GM10248 (cell line): ENCODE measurements at regions of chr12 and their contacts with region 1.

Region 1: GRCh38 chr12:15590180-15590826 is 198.9 kb downstream of the EPS8 start:
- DNase-seq: peak; percentile 78
- CTCF ChIP-seq: peak; percentile 80

Region 2: GRCh38 chr12:15532364-15532977 is 57.8 kb before region 1 on chr12:
- CTCF ChIA-PET with region 1: interaction called, 328 read pairs
- POLR2A ChIA-PET with region 1: no interaction called
- DNase-seq: peak; percentile 47
- CTCF ChIP-seq: peak; percentile 64

Region 3: DNA sequence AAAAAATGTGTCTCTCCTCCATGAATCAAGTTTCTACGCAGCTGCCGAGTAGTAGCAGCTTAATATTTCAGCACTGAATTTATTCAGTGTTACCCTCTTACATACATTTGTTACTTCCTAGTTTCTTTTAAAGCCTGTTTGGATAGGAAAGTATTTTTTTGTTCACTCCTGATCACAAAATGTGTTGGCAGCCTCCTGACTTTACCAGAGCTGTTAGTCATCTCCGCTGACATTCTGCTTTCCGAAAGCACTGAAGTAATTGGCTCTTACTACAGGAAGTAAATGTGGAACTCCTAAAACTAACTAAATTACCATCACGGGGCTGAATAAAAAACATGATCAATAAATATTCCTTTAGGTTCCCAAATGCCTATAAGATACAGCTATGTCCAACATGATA is 26.6 kb before region 1 on chr12:
- CTCF ChIA-PET with region 1: interaction called, 22 read pairs
- POLR2A ChIA-PET with region 1: no interaction called
- DNase-seq: no peak
- CTCF ChIP-seq: no peak

Region 4: GRCh38 chr12:15603474-15604085 is 13.3 kb after region 1 on chr12:
- CTCF ChIA-PET with region 1: interaction called, 11 read pairs
- POLR2A ChIA-PET with region 1: no interaction called
- DNase-seq: no peak
- CTCF ChIP-seq: no peak

Region 5: DNA sequence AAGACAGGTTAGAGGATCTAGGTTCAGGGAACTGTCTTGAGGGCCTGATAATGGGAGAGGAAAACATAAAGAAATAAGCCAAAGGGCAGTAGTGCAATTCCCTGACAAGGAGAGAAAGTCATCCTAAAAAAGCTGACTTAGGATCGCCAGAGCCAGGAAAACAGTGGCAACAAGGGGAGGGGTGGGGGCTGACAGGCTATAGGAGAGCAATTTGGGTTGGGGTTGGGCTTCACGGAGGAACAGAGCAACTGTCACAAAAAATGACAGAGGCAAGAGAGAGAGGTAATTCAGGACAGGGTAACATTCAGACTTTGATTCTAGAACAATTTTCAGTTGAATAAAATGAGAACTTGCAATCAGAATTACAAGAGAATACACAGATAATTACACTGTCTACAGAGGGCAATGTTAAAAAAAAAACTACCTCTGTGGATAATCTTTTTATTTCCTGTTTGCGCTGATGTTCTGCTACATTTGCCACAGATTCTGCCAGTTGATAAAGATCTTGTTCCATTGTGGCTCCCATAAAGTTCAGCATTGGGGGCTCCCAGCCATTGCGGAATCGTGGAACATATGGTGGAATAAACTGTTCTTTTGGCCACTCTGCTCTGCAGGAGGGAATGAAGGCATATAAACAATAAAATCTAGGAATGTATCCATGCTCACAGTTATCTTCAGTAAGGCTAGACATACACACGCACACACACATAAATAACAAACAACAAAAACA is 60.3 kb after region 1 on chr12:
- CTCF ChIA-PET with region 1: no interaction called
- POLR2A ChIA-PET with region 1: no interaction called
- DNase-seq: no peak
- CTCF ChIP-seq: no peak

Region 6: DNA sequence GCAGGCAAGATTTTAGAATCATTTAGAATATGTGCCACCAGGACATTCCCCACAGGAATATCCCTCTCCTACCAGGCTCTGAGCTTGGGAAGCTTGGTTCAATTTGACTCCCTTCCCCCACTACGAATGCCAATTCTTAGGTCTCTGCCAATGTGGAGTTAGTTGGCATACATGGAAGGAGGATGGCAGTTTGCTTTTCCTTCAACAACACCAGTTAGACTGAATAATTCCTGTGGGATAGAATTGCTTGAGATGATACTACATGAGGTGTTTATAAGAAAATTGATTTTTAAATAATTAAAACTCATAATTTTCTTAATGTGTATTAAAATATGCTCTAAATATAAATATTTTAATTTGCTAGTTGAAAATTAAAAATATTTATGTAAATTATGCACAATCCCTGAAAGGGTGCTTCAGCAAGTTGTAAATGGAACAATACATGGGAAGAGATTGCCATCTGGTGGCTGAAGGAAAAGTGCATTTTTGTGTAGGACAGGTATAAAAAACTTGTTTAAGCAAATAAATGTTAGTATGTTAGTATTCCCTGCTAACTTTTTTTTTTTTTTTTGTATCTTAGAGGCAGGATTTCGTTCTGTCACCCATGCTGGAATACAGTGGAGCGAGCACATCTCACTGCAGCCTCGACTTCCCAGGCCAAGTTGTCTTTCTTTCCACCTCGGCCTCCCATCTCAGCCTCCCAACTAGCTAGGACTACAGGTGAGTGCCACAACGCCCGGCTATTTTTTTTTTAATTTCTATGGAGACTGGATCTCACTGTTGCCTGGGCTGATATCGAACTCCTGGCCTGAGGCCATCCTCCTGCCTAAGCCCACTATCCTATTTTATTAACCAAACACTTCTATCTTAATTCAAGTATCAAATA is 266.0 kb after region 1 on chr12:
- CTCF ChIA-PET with region 1: interaction called, 208 read pairs
- POLR2A ChIA-PET with region 1: no interaction called
- DNase-seq: peak; percentile 29
- CTCF ChIP-seq: peak; percentile 71

Region 7: DNA sequence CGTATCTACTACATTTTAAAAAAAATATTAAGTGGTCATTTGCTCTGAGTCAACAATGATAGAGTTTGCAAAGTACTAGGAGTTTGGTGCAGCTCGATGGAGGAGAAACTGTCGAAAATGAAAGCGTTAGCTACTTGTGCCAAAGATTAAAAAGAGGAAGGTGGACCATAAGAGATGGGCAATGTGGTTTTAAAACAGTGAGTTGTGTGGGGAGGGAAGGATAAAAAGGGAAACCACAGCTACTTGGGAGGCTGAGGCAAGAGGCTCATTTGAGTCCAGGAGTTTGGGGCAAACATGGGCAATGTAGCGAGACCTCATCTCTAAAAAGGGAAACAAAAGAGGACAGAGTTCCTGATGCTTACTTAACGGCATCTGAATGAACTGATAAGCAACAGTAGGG is 273.7 kb after region 1 on chr12:
- CTCF ChIA-PET with region 1: interaction called, 208 read pairs
- POLR2A ChIA-PET with region 1: no interaction called
- DNase-seq: peak; percentile 15
- CTCF ChIP-seq: no peak

Region 8: GRCh38 chr12:15899282-15899870 is 309.1 kb after region 1 on chr12:
- CTCF ChIA-PET with region 1: interaction called, 14 read pairs
- POLR2A ChIA-PET with region 1: no interaction called
- DNase-seq: no peak
- CTCF ChIP-seq: peak; percentile 52